Activated B cell treated with CpG ODN at 0.5 μM for 24 hours (primary cell): ENCODE measurements at regions of chr10 and their contacts with region 1.

Region 1: GRCh38 chr10:59906417-59907202 is at the start of gene CCDC6:
- DNase-seq: peak; percentile 91
- ATAC-seq: peak; percentile 81
- H3K4me3 Mint-ChIP-seq: peak within 1 kb of the TSS; percentile 95
- H3K27ac Mint-ChIP-seq: peak within 1 kb of the TSS; percentile 95
- H3K4me1 Mint-ChIP-seq: peaks cover 59% of the 10 kb centered on the region
- H3K27me3 Mint-ChIP-seq: no peaks in the 10 kb centered on the region
- CTCF ChIP-seq: no peak
- total RNA-seq, gene CCDC6: 27.9 and 32.2 TPM in 2 replicates

Region 2: DNA sequence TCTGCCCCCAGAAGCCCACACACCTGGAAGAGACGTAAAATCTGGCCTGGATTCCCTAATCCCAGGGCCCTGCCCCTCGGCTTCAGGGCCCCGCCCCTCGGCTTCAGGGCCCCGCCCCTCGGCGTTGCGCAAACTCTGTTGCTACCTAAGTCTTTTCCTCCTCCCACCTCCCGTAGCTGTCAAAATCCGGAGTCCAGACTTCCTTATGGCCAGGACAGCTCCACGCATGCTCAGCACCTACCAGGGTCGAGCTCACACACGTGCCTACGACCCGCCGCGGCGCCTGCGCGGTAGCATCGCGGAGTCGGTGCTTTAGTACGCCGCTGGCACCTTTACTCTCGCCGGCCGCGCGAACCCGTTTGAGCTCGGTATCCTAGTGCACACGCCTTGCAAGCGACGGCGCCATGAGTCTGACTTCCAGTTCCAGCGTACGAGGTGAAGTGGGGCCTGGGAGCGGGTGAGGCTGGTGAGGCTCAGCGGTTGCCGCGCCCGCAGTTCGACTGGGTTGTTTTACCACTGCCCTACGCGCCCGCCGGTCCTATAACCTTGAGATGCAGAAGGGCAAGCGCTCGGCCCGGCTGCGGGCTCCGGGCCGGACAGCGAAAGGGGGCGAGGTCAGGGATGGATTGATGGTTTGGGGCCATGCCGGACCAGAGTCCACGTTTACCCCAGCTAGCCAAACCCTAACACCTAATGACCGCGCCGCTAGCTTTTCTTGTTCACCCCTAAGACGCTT is 1637.6 kb before region 1 on chr10 and contains the start of gene CISD1:
- CTCF ChIA-PET with region 1: no interaction called
- POLR2A ChIA-PET with region 1: interaction called, 3 read pairs
- intact Hi-C with region 1: loop called (anchors 2 kb)
- DNase-seq: peak; percentile 95
- ATAC-seq: peak; percentile 68
- H3K4me3 Mint-ChIP-seq: peak within 1 kb of the TSS; percentile 97
- H3K27ac Mint-ChIP-seq: peak within 1 kb of the TSS; percentile 93
- H3K4me1 Mint-ChIP-seq: peaks cover 47% of the 10 kb centered on the region
- H3K27me3 Mint-ChIP-seq: no peaks in the 10 kb centered on the region
- CTCF ChIP-seq: no peak
- total RNA-seq, gene CISD1: 16.7 and 23.8 TPM in 2 replicates

Region 3: GRCh38 chr10:59709395-59710125 is 197.1 kb before region 1 on chr10 and contains the start of gene SLC16A9:
- CTCF ChIA-PET with region 1: no interaction called
- POLR2A ChIA-PET with region 1: no interaction called
- intact Hi-C with region 1: loop called (anchors 10 kb)
- DNase-seq: peak; percentile 33
- ATAC-seq: peak; percentile 85
- H3K4me3 Mint-ChIP-seq: peak within 1 kb of the TSS; percentile 82
- H3K27ac Mint-ChIP-seq: no peak within 1 kb of the TSS
- H3K4me1 Mint-ChIP-seq: peaks cover 6% of the 10 kb centered on the region
- H3K27me3 Mint-ChIP-seq: peaks cover 25% of the 10 kb centered on the region
- CTCF ChIP-seq: no peak
- total RNA-seq, gene SLC16A9: 0.81 and 1.2 TPM in 2 replicates

Region 4: GRCh38 chr10:59872892-59873463 is 33.6 kb before region 1 on chr10:
- CTCF ChIA-PET with region 1: interaction called, 28 read pairs
- POLR2A ChIA-PET with region 1: interaction called, 59 read pairs
- intact Hi-C with region 1: no loop called
- DNase-seq: no peak
- ATAC-seq: no peak
- H3K4me3 Mint-ChIP-seq: peak overlapping the region; percentile 20
- H3K27ac Mint-ChIP-seq: peak overlapping the region; percentile 74
- H3K4me1 Mint-ChIP-seq: peaks cover 90% of the 10 kb centered on the region
- H3K27me3 Mint-ChIP-seq: no peaks in the 10 kb centered on the region
- CTCF ChIP-seq: no peak

Region 5: GRCh38 chr10:59970396-59971368 is 64.1 kb after region 1 on chr10:
- CTCF ChIA-PET with region 1: interaction called, 3 read pairs
- POLR2A ChIA-PET with region 1: no interaction called
- intact Hi-C with region 1: loop called (anchors 2 kb)
- DNase-seq: no peak
- ATAC-seq: peak; percentile 83
- H3K4me3 Mint-ChIP-seq: no peak overlapping the region
- H3K27ac Mint-ChIP-seq: no peak overlapping the region
- H3K4me1 Mint-ChIP-seq: peaks cover 5% of the 10 kb centered on the region
- H3K27me3 Mint-ChIP-seq: no peaks in the 10 kb centered on the region
- CTCF ChIP-seq: no peak

Region 6: GRCh38 chr10:60351191-60351853 is 444.7 kb after region 1 on chr10:
- CTCF ChIA-PET with region 1: no interaction called
- POLR2A ChIA-PET with region 1: no interaction called
- intact Hi-C with region 1: loop called (anchors 10 kb)
- DNase-seq: no peak
- ATAC-seq: peak; percentile 92
- H3K4me3 Mint-ChIP-seq: peak overlapping the region; percentile 47
- H3K27ac Mint-ChIP-seq: peak overlapping the region; percentile 87
- H3K4me1 Mint-ChIP-seq: peaks cover 49% of the 10 kb centered on the region
- H3K27me3 Mint-ChIP-seq: no peaks in the 10 kb centered on the region
- CTCF ChIP-seq: no peak

Region 7: GRCh38 chr10:61135276-61135721 is 1228.7 kb after region 1 on chr10:
- CTCF ChIA-PET with region 1: no interaction called
- POLR2A ChIA-PET with region 1: no interaction called
- intact Hi-C with region 1: loop called (anchors 5 kb)
- DNase-seq: peak; percentile 19
- ATAC-seq: peak; percentile 94
- H3K4me3 Mint-ChIP-seq: peak overlapping the region; percentile 68
- H3K27ac Mint-ChIP-seq: peak overlapping the region; percentile 91
- H3K4me1 Mint-ChIP-seq: peaks cover 43% of the 10 kb centered on the region
- H3K27me3 Mint-ChIP-seq: no peaks in the 10 kb centered on the region
- CTCF ChIP-seq: no peak